Activated CD8-positive, alpha-beta T cell treated with anti-CD3 and anti-CD28 coated beads for 36 hours (primary cell): ENCODE measurements at regions of chr22 and their contacts with region 1.

Region 1: GRCh38 chr22:35231585-35232084 is 25.7 kb upstream of the HMGXB4 start:
- DNase-seq: peak; percentile 88
- ATAC-seq: peak; percentile 84
- H3K4me3 Mint-ChIP-seq: no peak overlapping the region
- H3K27ac Mint-ChIP-seq: no peak overlapping the region
- H3K4me1 Mint-ChIP-seq: no peaks in the 10 kb centered on the region
- H3K27me3 Mint-ChIP-seq: peaks cover 21% of the 10 kb centered on the region
- CTCF ChIP-seq: peak; percentile 95

Region 2: GRCh38 chr22:35135165-35135564 is 96.5 kb before region 1 on chr22:
- CTCF ChIA-PET with region 1: no interaction called
- POLR2A ChIA-PET with region 1: no interaction called
- intact Hi-C with region 1: no loop called
- DNase-seq: no peak
- ATAC-seq: no peak
- H3K4me3 Mint-ChIP-seq: no peak overlapping the region
- H3K27ac Mint-ChIP-seq: no peak overlapping the region
- H3K4me1 Mint-ChIP-seq: no peaks in the 10 kb centered on the region
- H3K27me3 Mint-ChIP-seq: peaks cover 19% of the 10 kb centered on the region
- CTCF ChIP-seq: no peak

Region 3: GRCh38 chr22:35220221-35220620 is 11.4 kb before region 1 on chr22:
- CTCF ChIA-PET with region 1: interaction called, 17 read pairs
- POLR2A ChIA-PET with region 1: no interaction called
- intact Hi-C with region 1: no loop called
- DNase-seq: no peak
- ATAC-seq: no peak
- H3K4me3 Mint-ChIP-seq: no peak overlapping the region
- H3K27ac Mint-ChIP-seq: no peak overlapping the region
- H3K4me1 Mint-ChIP-seq: no peaks in the 10 kb centered on the region
- H3K27me3 Mint-ChIP-seq: peaks cover 3% of the 10 kb centered on the region
- CTCF ChIP-seq: no peak